GM10248 (cell line): ENCODE measurements at regions of chr21 and their contacts with region 1.

Region 1: GRCh38 chr21:31686272-31686915 is 26.9 kb downstream of the SOD1 start:
- DNase-seq: no peak
- CTCF ChIP-seq: no peak

Region 2: GRCh38 chr21:31612894-31613745 is 73.3 kb before region 1 on chr21:
- CTCF ChIA-PET with region 1: no interaction called
- POLR2A ChIA-PET with region 1: no interaction called
- DNase-seq: no peak
- CTCF ChIP-seq: no peak

Region 3: DNA sequence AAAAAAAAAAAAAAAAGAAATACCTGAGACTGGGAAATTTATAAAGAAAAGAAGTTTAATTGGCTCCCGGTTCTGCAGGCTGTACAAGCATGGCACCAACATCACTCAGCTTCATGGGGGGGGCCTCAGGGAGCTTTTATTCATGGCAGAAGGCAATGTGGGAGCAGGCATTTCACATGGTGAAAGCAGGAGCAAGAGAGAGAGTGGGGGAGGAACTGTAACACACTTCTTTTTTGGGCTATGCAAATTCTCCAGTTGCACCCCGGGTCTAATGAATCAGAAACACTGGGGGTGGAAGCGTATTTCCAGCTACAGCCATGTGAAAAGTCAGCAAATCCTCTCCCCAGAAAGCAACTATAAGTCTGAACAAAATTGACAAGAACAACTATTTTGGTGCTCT is 38.7 kb before region 1 on chr21:
- CTCF ChIA-PET with region 1: no interaction called
- POLR2A ChIA-PET with region 1: no interaction called
- DNase-seq: peak; percentile 48
- CTCF ChIP-seq: no peak

Region 4: DNA sequence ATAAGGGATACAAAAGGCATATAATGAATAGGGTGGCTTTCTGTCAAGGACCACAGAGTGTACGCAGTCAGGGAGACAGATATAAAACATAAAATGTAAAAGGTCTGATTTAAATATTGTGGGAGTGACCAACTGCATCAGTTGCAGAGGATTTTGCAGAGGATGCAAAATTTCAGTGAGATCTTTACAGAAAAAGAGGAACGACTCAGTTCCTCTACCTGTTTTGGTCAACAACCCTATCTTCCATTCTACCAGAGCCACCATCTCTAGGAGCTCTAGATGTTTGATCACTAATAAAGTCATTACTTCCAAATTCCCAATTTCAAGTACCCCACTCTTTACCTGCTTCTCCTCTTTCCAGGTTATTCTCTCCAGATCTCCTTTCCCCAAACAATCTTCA is 10.4 kb before region 1 on chr21:
- CTCF ChIA-PET with region 1: interaction called, 10 read pairs
- POLR2A ChIA-PET with region 1: interaction called, 5 read pairs
- DNase-seq: no peak
- CTCF ChIP-seq: no peak